Testis (tissue), 5 donors: ENCODE measurements at regions of chr3 and their contacts with region 1.

Region 1: DNA sequence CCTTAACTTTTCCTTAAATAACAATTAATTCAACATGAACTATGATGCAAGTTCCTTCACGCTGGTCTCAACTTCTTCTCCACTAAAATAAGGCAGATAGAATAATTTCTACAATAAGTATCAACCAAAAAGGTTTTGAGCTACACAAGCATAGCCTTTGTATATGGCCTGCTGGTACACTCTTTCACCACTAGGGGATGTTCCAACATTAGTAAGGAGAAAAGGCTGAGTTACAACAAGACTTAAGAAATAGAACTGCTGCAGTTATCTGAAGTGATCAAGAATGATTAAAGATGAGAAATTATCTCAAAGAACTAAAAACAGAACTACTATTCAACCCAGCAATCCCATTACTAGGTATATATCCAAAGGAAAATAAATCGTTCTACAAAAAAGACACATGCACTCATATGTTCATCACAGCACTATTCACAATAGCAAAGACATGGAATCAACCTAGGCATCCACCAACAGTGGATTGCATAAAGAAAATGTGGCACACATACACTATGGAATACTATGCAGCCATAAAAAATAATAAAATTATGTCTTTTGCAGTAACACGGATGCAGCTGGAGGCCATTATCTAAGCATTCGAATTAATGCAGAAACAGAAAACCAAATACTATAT is 14.4 kb downstream of the ATP13A3 start:
- DNase-seq: peak; percentile 49
- H3K4me3 ChIP-seq: no peak overlapping the region
- H3K27ac ChIP-seq: no peak overlapping the region
- H3K4me1 ChIP-seq: no peaks in the 10 kb centered on the region
- H3K27me3 ChIP-seq: no peaks in the 10 kb centered on the region
- CTCF ChIP-seq: peak; percentile 85 to 98 (median 91)
- POLR2A ChIP-seq: no peak

Region 2: DNA sequence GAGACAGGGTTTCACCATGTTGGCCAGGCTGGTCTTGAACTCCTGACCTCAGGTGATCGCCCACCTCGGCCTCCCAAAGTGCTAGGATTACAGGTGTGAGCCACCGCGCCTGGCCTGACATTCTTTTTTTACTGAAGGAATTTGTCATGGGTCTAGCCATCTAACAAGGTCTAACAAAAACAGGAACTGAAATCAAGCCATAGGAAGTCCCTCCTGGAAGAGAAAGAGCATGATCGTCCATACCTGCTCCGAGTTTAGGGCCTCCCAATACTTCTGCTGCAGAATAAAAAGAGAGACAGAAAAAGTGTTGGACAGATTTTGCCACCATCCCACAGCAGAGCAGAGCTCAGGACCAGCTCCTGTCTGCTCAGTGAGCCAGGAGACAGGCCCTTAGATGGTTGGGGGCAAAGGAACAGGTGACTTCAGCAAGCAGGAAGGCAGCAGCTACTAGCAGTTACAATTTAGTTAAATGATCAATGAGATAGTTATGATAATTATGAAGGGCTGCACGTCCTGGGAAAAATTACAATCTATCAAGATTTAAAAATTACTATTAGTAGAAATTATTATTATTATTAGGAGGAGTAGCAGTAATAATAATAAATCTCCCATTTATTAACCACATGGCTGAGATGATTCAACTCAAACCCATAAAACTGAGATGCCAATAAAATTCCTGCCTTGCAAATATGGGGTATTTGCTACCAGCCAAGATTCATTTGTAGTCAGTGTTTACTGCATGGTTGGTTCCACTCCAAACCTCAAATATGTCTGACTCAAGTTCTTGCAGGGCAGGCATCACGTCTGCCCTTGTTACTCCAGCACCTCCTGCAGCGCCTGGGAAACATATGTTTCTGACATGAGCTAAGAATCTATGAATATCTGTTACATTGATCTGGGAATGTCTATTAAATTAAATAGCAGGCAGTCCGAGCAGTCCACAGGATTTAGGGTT is 120.7 kb after region 1 on chr3:
- intact Hi-C with region 1: loop called (anchors 10 kb)
- DNase-seq: no peak
- H3K4me3 ChIP-seq: no peak overlapping the region
- H3K27ac ChIP-seq: no peak overlapping the region
- H3K4me1 ChIP-seq: no peaks in the 10 kb centered on the region
- H3K27me3 ChIP-seq: no peaks in the 10 kb centered on the region
- CTCF ChIP-seq: no peak
- POLR2A ChIP-seq: no peak

Region 3: DNA sequence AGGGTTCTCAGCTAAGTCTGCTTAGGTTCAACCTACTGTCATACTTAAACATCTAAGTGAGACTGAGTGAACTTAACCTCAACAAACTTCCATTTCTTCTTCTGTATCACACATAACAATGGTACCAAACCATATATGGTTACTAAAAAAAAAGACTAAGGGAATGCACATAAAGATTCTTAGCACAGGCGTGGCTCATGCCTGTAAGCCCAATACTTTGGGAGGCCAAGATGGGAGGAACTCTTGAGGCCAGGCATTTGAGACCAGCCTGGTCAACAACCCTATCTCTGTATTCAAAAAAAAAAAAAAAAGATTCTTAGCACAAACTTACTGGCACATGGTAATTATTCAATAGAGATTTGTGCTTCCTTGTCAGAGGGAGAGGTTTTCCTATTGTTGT is 912.5 kb after region 1 on chr3:
- intact Hi-C with region 1: no loop called
- DNase-seq: no peak
- H3K4me3 ChIP-seq: no peak overlapping the region
- H3K27ac ChIP-seq: peak overlapping the region in 1 of 2 donors; percentile 41
- H3K4me1 ChIP-seq: peaks cover 11% of the 10 kb centered on the region
- H3K27me3 ChIP-seq: no peaks in the 10 kb centered on the region
- CTCF ChIP-seq: no peak
- POLR2A ChIP-seq: no peak